ENCODE measurements at regions of chrX and their contacts with region 1.

Region 1: GRCh38 chrX:31036895-31037294 is 34.9 kb downstream of the FTHL17 start:
- DNase-seq: peak in 2 of 3 donors; percentile 29 to 40
- ATAC-seq: peak; percentile 81
- H3K4me3 ChIP-seq: no peak overlapping the region
- H3K4me1 ChIP-seq: no peaks in the 10 kb centered on the region
- CTCF ChIP-seq: no peak

Region 2: DNA sequence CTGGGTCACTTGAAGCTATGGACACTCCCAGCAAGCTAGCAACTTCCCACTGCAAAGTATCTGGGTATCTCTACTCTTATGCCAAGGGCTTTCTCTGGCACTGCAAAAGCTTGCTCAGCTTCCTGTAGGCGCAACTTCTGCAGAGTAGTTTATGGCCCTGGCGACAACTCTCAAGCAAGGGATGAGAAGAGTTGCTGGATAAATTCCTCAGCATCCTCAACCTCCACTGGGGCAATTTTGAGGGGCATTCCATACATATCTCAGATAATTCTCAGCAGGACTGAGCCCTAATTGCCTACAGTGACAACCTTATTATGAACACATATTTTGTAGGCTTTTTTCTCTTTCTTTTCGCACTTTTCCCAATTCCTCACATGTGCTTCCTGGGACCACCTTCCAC is 116.6 kb before region 1 on chrX:
- intact Hi-C with region 1: no loop called
- DNase-seq: no peak
- ATAC-seq: no peak
- H3K4me3 ChIP-seq: no peak overlapping the region
- H3K4me1 ChIP-seq: no peaks in the 10 kb centered on the region
- CTCF ChIP-seq: no peak

Region 3: DNA sequence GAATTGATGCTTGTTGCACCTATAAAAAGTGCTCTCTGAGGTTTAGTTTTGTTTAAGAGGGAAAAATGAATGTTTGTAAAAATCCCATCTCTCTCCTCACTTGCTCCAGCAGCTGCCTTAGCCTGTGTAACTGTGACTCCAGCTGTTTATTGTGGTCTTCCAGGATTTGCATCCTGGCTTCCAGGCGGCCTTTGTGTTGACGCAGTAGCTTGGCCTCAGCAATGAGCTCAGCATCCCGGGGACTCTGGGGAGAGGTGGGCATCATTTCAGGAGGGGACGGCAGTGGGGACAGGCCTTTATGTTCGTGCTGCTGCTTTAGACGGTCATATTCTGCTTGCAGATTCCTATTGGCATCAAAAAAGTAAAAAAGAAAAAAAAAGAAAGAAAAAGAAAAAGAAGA is 110.3 kb after region 1 on chrX:
- intact Hi-C with region 1: no loop called
- DNase-seq: no peak
- ATAC-seq: no peak
- H3K4me3 ChIP-seq: no peak overlapping the region
- H3K4me1 ChIP-seq: no peaks in the 10 kb centered on the region
- CTCF ChIP-seq: no peak

Region 4: GRCh38 chrX:31658360-31658759 is 621.5 kb after region 1 on chrX:
- intact Hi-C with region 1: loop called in 1 of 2 experiments (anchors 10 kb)
- DNase-seq: no peak
- ATAC-seq: no peak
- H3K4me3 ChIP-seq: no peak overlapping the region
- H3K4me1 ChIP-seq: no peaks in the 10 kb centered on the region
- CTCF ChIP-seq: no peak